Common myeloid progenitor, CD34-positive (primary cell): ENCODE measurements at regions of chr1 and their contacts with region 1.

Region 1: GRCh38 chr1:71049951-71050598 is 2.5 kb upstream of the PTGER3 start:
- DNase-seq: peak; percentile 73 to 89 (median 85)
- H3K4me3 ChIP-seq: no peak overlapping the region
- H3K27ac ChIP-seq: no peak overlapping the region
- H3K4me1 ChIP-seq: peaks cover 0 to 20% (median 18%) of the 10 kb centered on the region in 4 experiments
- H3K27me3 ChIP-seq: peaks cover 9 to 56% (median 23%) of the 10 kb centered on the region in 5 experiments

Region 2: DNA sequence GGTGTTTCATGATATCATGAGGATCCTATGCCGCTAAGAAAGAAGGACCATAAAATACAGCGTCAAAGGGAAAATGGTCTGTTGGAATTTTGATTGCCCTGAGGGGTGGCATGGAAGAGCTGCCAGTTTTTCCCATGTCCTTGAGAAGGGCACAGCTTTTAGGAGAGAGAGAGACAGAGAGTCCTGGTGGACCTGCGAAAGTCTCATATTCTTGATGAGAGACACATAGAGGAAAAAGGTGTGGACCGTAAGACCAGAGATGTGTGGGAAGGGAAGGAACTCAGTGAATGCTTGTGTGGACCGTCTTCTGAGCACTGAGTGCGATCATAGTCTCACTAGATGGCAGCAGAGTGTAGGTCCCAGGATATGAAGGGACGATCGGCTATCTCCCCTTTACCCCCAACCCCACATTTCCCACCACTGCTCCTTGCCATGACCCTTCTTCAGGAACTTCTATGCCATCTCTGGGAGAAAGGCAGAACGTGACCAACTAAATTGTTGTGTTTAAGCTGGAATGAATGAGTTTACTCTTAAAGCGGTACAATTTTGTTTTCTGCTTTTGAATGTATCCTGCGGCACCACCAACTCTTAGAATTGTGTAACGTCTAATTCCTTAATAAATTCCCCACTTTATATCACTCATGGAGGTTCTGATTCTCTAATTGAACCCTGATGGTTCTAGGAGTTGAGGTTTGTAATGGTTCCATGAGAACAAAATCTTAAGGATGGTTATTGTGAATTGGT is 521.3 kb before region 1 on chr1:
- CTCF ChIA-PET with region 1: interaction called, 54 read pairs
- POLR2A ChIA-PET with region 1: no interaction called
- DNase-seq: peak; percentile 33 to 65 (median 50)
- H3K4me3 ChIP-seq: no peak overlapping the region
- H3K27ac ChIP-seq: no peak overlapping the region
- H3K4me1 ChIP-seq: peaks cover 0 to 3% (median 0%) of the 10 kb centered on the region in 4 experiments
- H3K27me3 ChIP-seq: peaks cover 0 to 3% (median 0%) of the 10 kb centered on the region in 5 experiments

Region 3: GRCh38 chr1:70685300-70686241 is 364.5 kb before region 1 on chr1:
- CTCF ChIA-PET with region 1: interaction called, 27 read pairs
- POLR2A ChIA-PET with region 1: no interaction called
- DNase-seq: peak; percentile 67 to 81 (median 75)
- H3K4me3 ChIP-seq: no peak overlapping the region
- H3K27ac ChIP-seq: no peak overlapping the region
- H3K4me1 ChIP-seq: no peaks in the 10 kb centered on the region
- H3K27me3 ChIP-seq: no peaks in the 10 kb centered on the region

Region 4: GRCh38 chr1:70948396-70949017 is 101.6 kb before region 1 on chr1:
- CTCF ChIA-PET with region 1: no interaction called
- POLR2A ChIA-PET with region 1: no interaction called
- DNase-seq: peak in 1 of 3 donors; percentile 17
- H3K4me3 ChIP-seq: no peak overlapping the region
- H3K27ac ChIP-seq: no peak overlapping the region
- H3K4me1 ChIP-seq: no peaks in the 10 kb centered on the region
- H3K27me3 ChIP-seq: no peaks in the 10 kb centered on the region

Region 5: GRCh38 chr1:70970407-70970806 is 79.7 kb before region 1 on chr1:
- CTCF ChIA-PET with region 1: no interaction called
- POLR2A ChIA-PET with region 1: no interaction called
- DNase-seq: no peak
- H3K4me3 ChIP-seq: no peak overlapping the region
- H3K27ac ChIP-seq: no peak overlapping the region
- H3K4me1 ChIP-seq: no peaks in the 10 kb centered on the region
- H3K27me3 ChIP-seq: peaks cover 0 to 13% (median 3%) of the 10 kb centered on the region in 5 experiments